Right cardiac atrium (tissue), 5 donors: ENCODE measurements at regions of chr3 and their contacts with region 1.

Region 1: DNA sequence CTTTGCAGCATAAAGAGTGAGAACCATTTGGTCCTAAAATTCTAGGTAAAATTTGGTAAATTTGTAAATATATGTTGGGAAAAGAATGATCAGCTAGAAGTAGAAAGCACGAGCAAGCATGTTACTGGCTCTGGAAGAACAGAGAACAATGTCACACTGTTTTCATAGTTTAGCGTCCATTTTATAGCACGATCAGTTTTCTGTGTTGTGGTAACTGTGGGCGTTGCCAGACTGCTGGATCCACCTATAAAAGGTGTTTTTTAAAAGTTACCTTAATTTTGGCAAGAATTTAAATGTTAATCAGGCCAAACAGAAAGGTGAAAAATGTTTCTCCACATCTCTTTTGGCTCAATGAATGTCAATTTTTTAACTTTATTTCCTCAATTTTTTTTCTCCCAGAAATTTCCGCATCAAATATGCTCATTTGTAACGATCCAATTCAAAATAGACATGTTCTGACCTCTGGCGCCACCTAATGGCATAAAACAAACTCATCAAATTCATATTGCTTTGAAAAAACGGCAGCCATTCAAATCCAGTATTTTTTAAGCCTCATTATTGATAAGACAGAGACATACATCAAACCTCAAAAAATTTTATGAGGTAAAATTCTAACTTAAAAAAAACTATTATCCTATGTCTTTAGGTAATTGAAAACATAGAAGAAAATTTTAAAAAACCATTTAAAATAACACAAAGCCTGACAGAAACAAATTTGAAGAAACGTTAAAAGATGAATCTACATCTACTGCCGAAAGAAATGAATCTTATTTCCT is 5.5 kb upstream of the GP5 start:
- DNase-seq: no peak
- ATAC-seq: no peak
- H3K4me3 ChIP-seq: no peak overlapping the region
- H3K27ac ChIP-seq: no peak overlapping the region
- H3K4me1 ChIP-seq: no peaks in the 10 kb centered on the region
- H3K27me3 ChIP-seq: no peaks in the 10 kb centered on the region

Region 2: DNA sequence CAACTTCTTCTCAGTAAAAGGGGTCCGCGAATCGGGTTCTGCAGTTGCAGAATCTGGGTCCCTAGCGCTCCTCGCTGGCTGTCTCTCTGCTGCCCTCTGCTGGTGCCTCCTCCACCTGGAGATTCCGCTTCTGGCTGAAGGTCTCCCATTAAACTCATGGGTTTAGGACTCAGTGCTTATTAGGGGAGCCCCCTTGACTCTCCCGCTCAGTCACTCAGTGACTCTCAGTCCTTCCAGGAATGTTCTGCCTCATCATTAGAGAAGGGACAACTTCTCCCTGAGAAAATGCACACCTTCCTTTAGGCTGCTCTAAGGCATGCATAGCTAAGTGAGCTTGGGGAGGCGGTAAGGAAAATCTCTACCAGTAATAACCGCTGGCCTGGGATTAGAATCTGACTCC is 60.5 kb before region 1 on chr3:
- intact Hi-C with region 1: loop called in 2 of 4 experiments (anchors 5 to 10 kb)
- DNase-seq: peak; percentile 74 to 93 (median 87)
- ATAC-seq: peak; percentile 58 to 71
- H3K4me3 ChIP-seq: no peak overlapping the region
- H3K27ac ChIP-seq: no peak overlapping the region
- H3K4me1 ChIP-seq: no peaks in the 10 kb centered on the region
- H3K27me3 ChIP-seq: no peaks in the 10 kb centered on the region

Region 3: GRCh38 chr3:194623449-194624290 is 219.1 kb after region 1 on chr3:
- intact Hi-C with region 1: no loop called
- DNase-seq: no peak
- ATAC-seq: no peak
- H3K4me3 ChIP-seq: no peak overlapping the region
- H3K27ac ChIP-seq: no peak overlapping the region
- H3K4me1 ChIP-seq: no peaks in the 10 kb centered on the region
- H3K27me3 ChIP-seq: no peaks in the 10 kb centered on the region